Endothelial cell of umbilical vein (primary cell): ENCODE measurements at regions of chr9 and their contacts with region 1.

Region 1: DNA sequence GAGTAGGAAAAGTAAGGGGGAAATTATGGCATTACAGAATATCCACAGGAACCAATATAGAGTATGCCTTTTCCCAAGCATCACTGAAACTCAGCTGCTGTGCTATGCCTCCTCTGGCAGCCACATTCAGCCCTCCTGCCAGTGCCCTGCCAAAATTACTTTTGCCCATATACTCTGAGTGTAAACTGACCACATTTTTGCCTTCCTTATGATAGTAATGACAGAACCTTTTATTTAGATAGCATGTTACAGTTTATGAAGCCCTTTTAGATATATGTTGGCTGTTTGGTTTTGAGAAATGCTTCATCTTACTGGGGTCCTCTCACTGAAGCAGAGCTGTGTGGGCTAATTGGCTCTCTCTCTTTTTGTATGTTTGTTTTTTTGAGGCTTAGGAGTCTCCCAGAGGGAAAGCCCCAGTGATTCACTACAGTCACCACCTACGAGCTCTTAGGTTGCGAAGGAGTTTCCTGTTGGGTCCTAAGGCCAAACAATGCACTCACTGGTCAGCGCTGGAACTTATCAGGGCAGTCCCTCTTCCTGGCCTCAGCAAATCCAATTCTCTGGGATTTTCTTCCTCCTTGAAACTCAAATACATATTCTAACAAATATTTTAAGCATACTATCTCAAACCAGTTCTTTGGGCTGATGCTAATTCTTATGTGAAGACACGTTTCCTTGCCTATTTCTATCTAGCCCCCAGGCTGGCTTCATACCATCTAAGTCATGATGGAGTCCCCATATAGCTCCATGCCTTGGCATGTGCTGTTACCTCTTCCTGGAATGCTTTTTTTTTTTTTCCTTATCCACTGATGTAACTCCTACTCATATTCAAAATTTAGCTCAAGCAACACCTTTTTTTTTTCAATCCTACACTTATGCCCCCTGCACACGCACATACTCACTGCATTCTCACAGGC is 3.7 kb downstream of the PHF24 start:
- DNase-seq: peak; percentile 30
- H3K4me3 ChIP-seq: no peak overlapping the region
- H3K27ac ChIP-seq: no peak overlapping the region
- H3K4me1 ChIP-seq: peaks cover 3% of the 10 kb centered on the region
- H3K27me3 ChIP-seq: peaks cover 57 to 87% of the 10 kb centered on the region in 2 experiments
- CTCF ChIP-seq: no peak
- POLR2A ChIP-seq: no peak

Region 2: DNA sequence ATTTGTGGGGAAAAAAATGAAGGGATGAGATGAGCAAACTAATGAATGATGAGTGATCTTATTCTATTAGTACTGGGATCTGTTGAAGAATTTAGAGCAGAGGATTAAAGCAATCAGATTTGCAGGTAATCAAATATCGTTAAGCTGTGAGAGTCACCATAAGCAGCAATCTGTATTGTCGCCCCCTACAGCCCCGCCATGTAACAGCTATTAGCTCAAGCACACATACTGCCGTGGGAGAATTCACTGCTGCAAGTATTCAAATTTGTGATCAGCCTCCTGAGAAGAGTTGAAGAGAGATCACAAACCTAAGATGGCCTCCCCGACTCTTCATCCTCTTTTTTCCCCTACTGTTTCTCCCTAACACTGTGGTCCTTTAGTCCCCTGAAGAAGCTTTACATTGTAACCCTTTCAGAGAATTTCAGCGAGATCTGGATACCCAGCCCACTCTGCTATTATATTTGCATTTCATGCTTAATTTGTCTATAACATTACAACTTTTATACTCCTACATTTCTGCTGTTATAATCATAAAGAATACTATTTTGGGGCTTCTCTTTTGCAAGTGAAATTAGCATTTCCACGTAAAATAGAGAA is 32.2 kb before region 1 on chr9:
- CTCF ChIA-PET with region 1: interaction called, 12 read pairs
- POLR2A ChIA-PET with region 1: no interaction called
- dilution Hi-C with region 1: no loop called
- intact Hi-C with region 1: no loop called
- DNase-seq: peak; percentile 32
- H3K4me3 ChIP-seq: no peak overlapping the region
- H3K27ac ChIP-seq: no peak overlapping the region
- H3K4me1 ChIP-seq: no peaks in the 10 kb centered on the region
- H3K27me3 ChIP-seq: peaks cover 10 to 18% of the 10 kb centered on the region in 2 experiments
- CTCF ChIP-seq: peak; percentile 52 to 77
- POLR2A ChIP-seq: no peak